B cell (primary cell): ENCODE measurements at regions of chr6 and their contacts with region 1.

Region 1: DNA sequence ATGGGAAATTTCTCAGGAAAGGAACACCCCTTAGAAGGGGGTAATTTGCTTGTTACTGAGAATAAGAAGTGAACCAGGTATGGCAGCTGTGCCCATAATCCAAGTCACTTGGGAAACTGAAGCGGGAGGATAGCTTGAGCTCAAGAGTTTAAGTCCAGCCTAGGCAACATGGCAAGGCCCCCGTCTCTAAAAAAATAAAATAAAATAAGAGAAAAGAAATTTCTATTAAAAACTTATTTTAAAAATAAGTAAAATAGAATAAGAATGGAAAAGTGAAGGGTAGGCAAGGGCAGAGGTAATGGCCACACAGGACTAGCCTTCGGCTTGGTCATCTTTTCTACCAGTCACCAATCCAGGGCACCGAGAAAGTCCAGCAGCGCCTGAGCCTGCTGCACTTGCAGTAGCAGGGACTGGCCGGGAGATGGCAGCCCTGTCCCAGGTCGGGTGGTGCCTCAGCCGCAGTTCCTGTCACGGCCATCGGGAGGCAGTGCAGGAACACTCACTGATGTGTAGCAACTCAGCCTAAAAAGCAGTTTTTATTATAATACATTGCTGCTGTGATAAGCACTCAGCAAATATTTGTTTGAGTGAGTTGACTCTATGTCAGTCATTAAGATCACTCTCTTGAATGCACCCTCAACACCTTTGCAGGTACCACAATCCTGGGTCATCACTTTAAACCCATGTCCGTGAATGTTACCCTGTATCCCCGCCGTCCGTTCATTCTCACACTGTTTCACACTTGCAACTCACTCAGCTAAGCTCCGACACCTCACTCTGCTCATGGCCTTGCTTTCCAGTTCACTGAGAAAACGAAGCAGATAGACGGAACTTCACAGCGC is 23.2 kb upstream of the GCM1 start:
- DNase-seq: peak; percentile 93
- ATAC-seq: peak; percentile 99
- H3K4me3 ChIP-seq: peak overlapping the region in 3 of 5 experiments; percentile 29 to 40 (median 34)
- H3K4me3 Mint-ChIP-seq: peak overlapping the region; percentile 65
- H3K27ac ChIP-seq: peak overlapping the region; percentile 76 to 88
- H3K27ac Mint-ChIP-seq: peak overlapping the region; percentile 81
- H3K4me1 ChIP-seq: peaks cover 28 to 30% of the 10 kb centered on the region in 2 donors
- H3K4me1 Mint-ChIP-seq: peaks cover 24% of the 10 kb centered on the region
- H3K27me3 ChIP-seq: no peaks in the 10 kb centered on the region
- H3K27me3 Mint-ChIP-seq: no peaks in the 10 kb centered on the region
- CTCF ChIP-seq: peak; percentile 100

Region 2: DNA sequence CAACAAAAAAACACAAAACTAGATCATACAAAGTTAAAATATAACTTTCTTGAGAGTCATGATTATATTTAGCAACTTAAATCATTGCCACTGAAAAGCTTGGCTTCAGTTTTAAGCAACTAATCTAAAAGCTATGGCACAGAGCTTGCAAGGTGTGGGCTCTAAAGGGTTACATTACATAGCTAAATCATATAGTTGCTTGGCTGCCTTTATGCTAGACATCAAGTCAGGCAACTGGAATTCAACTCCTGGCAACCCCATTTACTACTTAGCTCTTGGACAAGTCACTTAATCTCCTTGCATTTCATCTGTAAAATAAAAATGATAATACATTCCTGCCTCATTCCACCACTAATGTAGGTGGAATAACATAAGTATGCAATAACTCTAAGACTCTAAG is 17.7 kb after region 1 on chr6:
- CTCF ChIA-PET with region 1: interaction called, 27 read pairs
- POLR2A ChIA-PET with region 1: interaction called, 14 read pairs
- intact Hi-C with region 1: no loop called
- DNase-seq: no peak
- ATAC-seq: no peak
- H3K4me3 ChIP-seq: no peak overlapping the region
- H3K4me3 Mint-ChIP-seq: no peak overlapping the region
- H3K27ac ChIP-seq: no peak overlapping the region
- H3K27ac Mint-ChIP-seq: no peak overlapping the region
- H3K4me1 ChIP-seq: peaks cover 50 to 51% of the 10 kb centered on the region in 2 donors
- H3K4me1 Mint-ChIP-seq: peaks cover 47% of the 10 kb centered on the region
- H3K27me3 ChIP-seq: no peaks in the 10 kb centered on the region
- H3K27me3 Mint-ChIP-seq: no peaks in the 10 kb centered on the region
- CTCF ChIP-seq: no peak

Region 3: DNA sequence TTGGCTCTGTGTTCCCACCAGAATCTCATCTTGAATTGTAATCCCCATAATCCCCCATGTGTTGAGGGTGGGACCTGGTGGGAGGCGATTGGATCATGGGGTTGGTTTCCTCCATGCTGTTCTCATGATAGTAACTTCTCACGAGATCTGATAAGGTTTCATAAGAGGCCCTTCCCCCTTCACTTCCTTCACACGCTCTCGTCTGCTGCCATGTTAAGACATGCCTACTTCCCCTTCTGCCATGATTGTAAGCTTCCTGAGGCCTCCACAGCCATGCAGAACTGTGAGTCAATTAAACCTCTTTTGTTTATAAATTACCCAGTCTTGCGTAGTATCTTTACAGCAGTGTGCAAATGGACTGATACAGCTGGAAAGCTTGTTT is 86.9 kb after region 1 on chr6:
- CTCF ChIA-PET with region 1: interaction called, 13 read pairs
- POLR2A ChIA-PET with region 1: no interaction called
- intact Hi-C with region 1: no loop called
- DNase-seq: no peak
- ATAC-seq: no peak
- H3K4me3 ChIP-seq: no peak overlapping the region
- H3K4me3 Mint-ChIP-seq: no peak overlapping the region
- H3K27ac ChIP-seq: peak overlapping the region in 1 of 2 donors; percentile 29
- H3K27ac Mint-ChIP-seq: peak overlapping the region; percentile 80
- H3K4me1 ChIP-seq: peaks cover 34 to 37% of the 10 kb centered on the region in 2 donors
- H3K4me1 Mint-ChIP-seq: peaks cover 63% of the 10 kb centered on the region
- H3K27me3 ChIP-seq: no peaks in the 10 kb centered on the region
- H3K27me3 Mint-ChIP-seq: no peaks in the 10 kb centered on the region
- CTCF ChIP-seq: no peak

Region 4: DNA sequence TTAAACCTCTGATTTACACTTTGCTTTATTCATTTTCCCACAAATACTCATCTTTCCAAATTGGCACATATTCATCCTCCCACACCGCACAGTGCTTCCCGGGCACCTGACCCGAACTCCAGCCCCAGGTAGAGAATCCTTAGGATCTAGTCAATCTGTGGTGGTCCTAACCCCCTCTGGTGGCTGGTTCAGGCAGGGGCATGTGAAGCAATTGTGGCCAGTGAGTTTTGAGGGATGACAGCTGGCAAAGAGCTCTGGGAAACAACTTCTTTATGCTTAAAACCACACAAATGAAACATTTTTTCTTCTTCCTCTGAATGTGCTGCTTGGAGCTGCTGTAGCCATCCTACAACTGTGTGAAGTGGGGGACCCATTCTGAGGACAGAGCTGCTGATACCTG is 122.3 kb after region 1 on chr6:
- CTCF ChIA-PET with region 1: interaction called, 160 read pairs
- POLR2A ChIA-PET with region 1: interaction called, 4 read pairs
- intact Hi-C with region 1: loop called (anchors 1 kb)
- DNase-seq: peak; percentile 60
- ATAC-seq: peak; percentile 39
- H3K4me3 ChIP-seq: no peak overlapping the region
- H3K4me3 Mint-ChIP-seq: no peak overlapping the region
- H3K27ac ChIP-seq: peak overlapping the region; percentile 37 to 81
- H3K27ac Mint-ChIP-seq: peak overlapping the region; percentile 90
- H3K4me1 ChIP-seq: peaks cover 86 to 93% of the 10 kb centered on the region in 2 donors
- H3K4me1 Mint-ChIP-seq: peaks cover 87% of the 10 kb centered on the region
- H3K27me3 ChIP-seq: no peaks in the 10 kb centered on the region
- H3K27me3 Mint-ChIP-seq: no peaks in the 10 kb centered on the region
- CTCF ChIP-seq: peak; percentile 83

Region 5: GRCh38 chr6:53348371-53349208 is 176.8 kb after region 1 on chr6 and contains the start of gene ELOVL5:
- CTCF ChIA-PET with region 1: interaction called, 29 read pairs
- POLR2A ChIA-PET with region 1: interaction called, 10 read pairs
- intact Hi-C with region 1: loop called (anchors 1 kb)
- DNase-seq: peak; percentile 99
- ATAC-seq: peak; percentile 79
- H3K4me3 ChIP-seq: peak within 1 kb of the TSS; percentile 65 to 97 (median 86)
- H3K4me3 Mint-ChIP-seq: peak within 1 kb of the TSS; percentile 94
- H3K27ac ChIP-seq: peak within 1 kb of the TSS; percentile 84 to 91
- H3K27ac Mint-ChIP-seq: peak within 1 kb of the TSS; percentile 99
- H3K4me1 ChIP-seq: peaks cover 35 to 36% of the 10 kb centered on the region in 2 donors
- H3K4me1 Mint-ChIP-seq: peaks cover 59% of the 10 kb centered on the region
- H3K27me3 ChIP-seq: no peaks in the 10 kb centered on the region
- H3K27me3 Mint-ChIP-seq: no peaks in the 10 kb centered on the region
- CTCF ChIP-seq: no peak
- total RNA-seq, gene ELOVL5: 128 and 134 TPM in 2 replicates

Region 6: DNA sequence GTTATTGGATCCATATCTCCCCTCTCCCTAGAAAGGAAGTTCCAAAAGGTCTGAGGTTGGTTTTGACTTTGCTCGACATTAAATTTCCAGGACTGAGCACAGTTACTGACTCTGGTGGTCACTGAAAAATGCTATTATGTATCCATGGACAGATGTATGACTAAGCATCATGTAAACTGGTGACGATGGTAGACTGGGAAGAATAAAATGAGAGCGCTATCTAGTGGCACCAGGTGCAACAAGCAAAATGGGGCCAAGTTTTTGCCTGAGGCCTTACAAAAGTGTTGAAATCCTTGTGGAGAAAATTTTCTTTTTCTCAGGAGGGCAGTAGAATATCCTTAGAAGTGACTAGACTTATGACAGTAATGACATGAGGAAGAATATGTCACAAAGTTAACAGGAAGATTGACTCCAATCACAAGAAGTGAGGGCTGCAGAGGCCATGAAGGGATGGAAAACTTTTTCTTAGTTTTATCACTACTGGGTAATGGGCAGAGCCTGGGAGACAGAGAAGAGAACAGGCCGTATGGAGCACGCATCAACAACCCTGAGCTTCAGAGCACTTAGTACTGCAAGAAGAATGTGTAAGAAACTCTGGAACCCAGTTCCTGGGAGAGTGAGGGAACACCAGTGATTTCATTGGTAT is 265.9 kb after region 1 on chr6:
- CTCF ChIA-PET with region 1: interaction called, 68 read pairs
- POLR2A ChIA-PET with region 1: interaction called, 4 read pairs
- intact Hi-C with region 1: loop called (anchors 1 kb)
- DNase-seq: peak; percentile 51
- ATAC-seq: peak; percentile 73
- H3K4me3 ChIP-seq: no peak overlapping the region
- H3K4me3 Mint-ChIP-seq: no peak overlapping the region
- H3K27ac ChIP-seq: no peak overlapping the region
- H3K27ac Mint-ChIP-seq: peak overlapping the region; percentile 32
- H3K4me1 ChIP-seq: peaks cover 0 to 13% of the 10 kb centered on the region in 2 donors
- H3K4me1 Mint-ChIP-seq: peaks cover 23% of the 10 kb centered on the region
- H3K27me3 ChIP-seq: no peaks in the 10 kb centered on the region
- H3K27me3 Mint-ChIP-seq: no peaks in the 10 kb centered on the region
- CTCF ChIP-seq: peak; percentile 60